Activated CD8-positive, alpha-beta memory T cell treated with anti-CD3 and anti-CD28 coated beads, Interleukin-2, amount 10 ng/mL, durations not matched to agents 7 days and 5 days (primary cell): ENCODE measurements at regions of chr3 and their contacts with region 1.

Region 1: DNA sequence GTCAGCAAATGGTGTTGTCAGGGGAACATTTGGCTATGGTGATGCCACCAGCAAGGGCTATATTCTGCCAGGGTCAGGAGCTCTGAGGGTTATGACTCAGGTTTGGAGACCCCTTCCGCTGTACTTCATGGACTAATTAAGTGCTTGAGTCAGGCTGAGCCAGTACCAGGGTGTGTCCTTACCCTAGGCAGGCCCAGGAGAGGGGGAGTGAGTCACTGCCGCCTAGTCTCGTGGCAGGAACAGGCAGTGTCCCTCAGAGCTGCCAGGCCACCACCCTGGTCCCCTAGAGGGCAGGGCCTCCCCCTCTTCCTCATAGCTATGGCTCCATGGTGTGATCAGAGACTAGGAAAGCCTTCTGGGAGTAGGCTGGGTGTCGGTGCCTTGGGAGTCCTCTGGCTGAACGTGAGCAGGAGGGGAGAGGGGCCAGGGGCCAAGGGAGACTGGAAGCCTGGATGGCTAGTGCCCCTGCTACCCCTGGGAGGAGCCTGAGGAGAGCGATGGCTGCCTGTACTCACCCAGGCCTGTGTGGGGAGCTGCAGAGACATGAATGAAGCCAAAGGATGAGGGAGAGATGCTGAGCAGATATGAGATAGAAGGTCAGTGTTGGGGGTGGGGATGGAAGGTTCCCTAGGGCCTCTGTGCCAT is 10.6 kb downstream of the MAPKAPK3 start:
- DNase-seq: no peak
- ATAC-seq: peak; percentile 25
- H3K4me3 Mint-ChIP-seq: no peak overlapping the region
- H3K27ac Mint-ChIP-seq: no peak overlapping the region
- H3K4me1 Mint-ChIP-seq: peaks cover 91% of the 10 kb centered on the region
- H3K27me3 Mint-ChIP-seq: no peaks in the 10 kb centered on the region

Region 2: DNA sequence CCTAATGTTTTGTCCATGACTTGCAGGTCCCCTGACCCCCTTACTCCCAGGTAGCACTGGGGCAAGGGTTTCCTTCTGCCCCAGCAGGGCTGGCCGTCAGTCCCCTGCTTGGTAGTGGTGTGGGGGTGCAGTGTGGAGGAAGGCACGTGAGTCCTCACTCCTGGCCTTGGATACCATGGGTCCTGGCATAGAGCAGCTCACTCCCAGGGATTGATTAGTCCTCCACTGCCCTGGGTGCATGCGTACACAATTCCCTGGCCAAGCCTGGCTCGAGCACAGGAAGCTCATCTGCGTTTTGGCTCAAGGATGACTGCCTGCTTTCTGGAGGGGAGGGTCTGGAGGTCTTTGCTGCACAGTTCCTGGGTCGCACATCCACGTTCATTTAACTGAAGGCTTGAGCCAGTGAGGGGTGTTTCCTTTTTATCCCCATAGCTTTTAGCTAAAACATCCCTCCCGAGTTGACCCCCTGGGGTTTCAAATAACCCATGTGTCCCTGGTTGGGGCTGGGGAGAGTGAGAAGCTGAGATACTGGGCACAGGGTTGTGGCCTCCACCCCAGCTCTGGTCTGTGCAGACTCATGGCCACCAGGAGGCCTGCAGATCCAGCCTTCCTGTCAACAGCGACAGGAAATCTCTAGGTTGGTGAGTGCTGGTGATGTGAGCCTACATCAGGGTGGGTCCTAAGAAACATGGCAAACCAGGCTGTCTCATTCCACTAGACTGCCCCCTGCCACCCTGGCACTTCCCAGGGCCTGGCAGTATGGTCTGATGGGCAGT is 46.7 kb before region 1 on chr3:
- CTCF ChIA-PET with region 1: no interaction called
- DNase-seq: no peak
- ATAC-seq: peak; percentile 42
- H3K4me3 Mint-ChIP-seq: no peak overlapping the region
- H3K27ac Mint-ChIP-seq: peak overlapping the region; percentile 14
- H3K4me1 Mint-ChIP-seq: peaks cover 50% of the 10 kb centered on the region
- H3K27me3 Mint-ChIP-seq: no peaks in the 10 kb centered on the region

Region 3: DNA sequence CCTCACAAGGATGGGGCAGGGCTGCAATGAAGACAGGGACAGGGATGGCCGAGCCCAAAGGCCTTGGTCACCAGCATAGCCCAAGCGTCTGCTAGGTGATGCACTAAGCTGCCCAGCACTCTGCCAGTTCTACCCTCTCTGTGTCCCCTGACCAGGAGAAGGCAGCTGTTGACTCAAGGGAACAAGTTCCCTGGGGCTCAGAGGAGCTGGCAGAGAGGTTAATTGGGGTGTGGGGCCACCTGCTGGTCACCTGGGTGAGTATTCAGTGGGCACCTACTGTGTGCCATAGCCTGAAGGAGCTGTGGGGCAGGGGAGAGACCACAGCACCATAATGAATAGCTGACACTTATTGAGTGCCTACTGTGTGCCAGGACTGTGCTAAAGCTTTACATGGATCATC is 25.2 kb after region 1 on chr3:
- CTCF ChIA-PET with region 1: interaction called, 164 read pairs
- DNase-seq: peak; percentile 73
- ATAC-seq: peak; percentile 71
- H3K4me3 Mint-ChIP-seq: no peak overlapping the region
- H3K27ac Mint-ChIP-seq: no peak overlapping the region
- H3K4me1 Mint-ChIP-seq: peaks cover 7% of the 10 kb centered on the region
- H3K27me3 Mint-ChIP-seq: no peaks in the 10 kb centered on the region